ENCODE measurements at regions of chr17 and their contacts with region 1.

Region 1: GRCh38 chr17:30716461-30717300 is 107.8 kb downstream of the CRLF3 start:
- DNase-seq: no peak
- H3K4me3 ChIP-seq: no peak overlapping the region
- H3K27ac ChIP-seq: no peak overlapping the region
- H3K4me1 ChIP-seq: peaks cover 0 to 18% (median 12%) of the 10 kb centered on the region in 4 donors
- H3K27me3 ChIP-seq: no peaks in the 10 kb centered on the region
- CTCF ChIP-seq: no peak
- EP300 ChIP-seq: no peak
- POLR2A ChIP-seq: no peak

Region 2: GRCh38 chr17:30477083-30477773 is 239.5 kb before region 1 on chr17 and contains the start of gene GOSR1:
- intact Hi-C with region 1: loop called (anchors 10 kb)
- DNase-seq: peak; percentile 98
- H3K4me3 ChIP-seq: peak within 1 kb of the TSS; percentile 90 to 97 (median 94)
- H3K27ac ChIP-seq: peak within 1 kb of the TSS; percentile 92 to 96 (median 96)
- H3K4me1 ChIP-seq: peaks cover 21 to 45% (median 36%) of the 10 kb centered on the region in 4 donors
- H3K27me3 ChIP-seq: no peaks in the 10 kb centered on the region
- CTCF ChIP-seq: peak; percentile 82 to 87 (median 83)
- EP300 ChIP-seq: no peak
- POLR2A ChIP-seq: no peak
- total RNA-seq, gene GOSR1: 28.3 to 49.5 (median 34.2) TPM

Region 3: DNA sequence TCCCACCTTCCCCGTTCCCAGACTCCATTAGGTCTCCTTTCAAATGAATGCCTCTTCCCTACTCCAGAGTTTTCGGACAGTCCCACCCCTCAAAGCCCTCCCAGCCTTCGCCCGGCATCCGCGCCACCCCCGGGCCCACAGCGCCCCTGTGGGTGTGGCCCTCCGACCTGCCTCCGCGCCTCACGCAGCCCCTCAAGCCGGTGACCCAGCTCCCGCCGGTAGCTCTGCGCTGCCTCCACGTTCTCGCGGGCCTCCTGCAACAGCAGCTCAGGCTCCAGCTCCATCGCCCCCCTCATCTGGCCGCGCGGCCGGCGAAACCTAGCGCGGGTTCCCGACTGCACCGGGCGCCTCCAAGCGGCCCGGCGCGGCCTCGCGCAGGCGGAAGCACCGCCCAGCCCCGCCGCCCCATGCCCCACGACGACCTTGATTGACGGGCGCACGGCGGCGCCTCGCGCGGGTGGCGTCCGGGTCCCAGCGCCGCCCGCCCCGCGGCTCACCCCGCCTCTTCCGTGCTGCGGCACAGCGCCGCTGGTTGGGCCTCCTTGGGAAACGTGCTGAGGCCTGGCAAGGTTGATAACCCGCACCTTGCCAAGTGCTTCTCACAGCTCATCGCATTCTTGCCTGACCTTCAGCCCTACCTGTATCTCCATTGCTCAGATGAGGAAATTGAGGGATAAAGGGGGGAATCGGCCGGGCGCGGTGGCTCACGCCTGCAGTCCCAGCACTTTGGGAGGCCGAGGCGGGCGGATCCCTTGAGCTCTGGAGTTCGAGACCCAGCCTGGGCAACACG is 107.9 kb after region 1 on chr17 and contains the start of gene CRLF3:
- intact Hi-C with region 1: loop called (anchors 10 kb)
- DNase-seq: peak; percentile 92
- H3K4me3 ChIP-seq: peak within 1 kb of the TSS; percentile 72 to 90 (median 81)
- H3K27ac ChIP-seq: peak within 1 kb of the TSS; percentile 73 to 85 (median 80)
- H3K4me1 ChIP-seq: peaks cover 6 to 35% (median 32%) of the 10 kb centered on the region in 4 donors
- H3K27me3 ChIP-seq: no peaks in the 10 kb centered on the region
- CTCF ChIP-seq: peak; percentile 53 to 77 (median 64)
- EP300 ChIP-seq: no peak
- POLR2A ChIP-seq: peak; percentile 35
- total RNA-seq, gene CRLF3: 8.2 to 11.6 (median 9.9) TPM

Measured in esophagus muscularis mucosa (tissue), 4 donors.